ENCODE measurements at regions of chr16 and their contacts with region 1.

Region 1: GRCh38 chr16:76464955-76465638 is 187.9 kb downstream of the CNTNAP4 start:
- DNase-seq: no peak
- ATAC-seq: no peak
- H3K4me3 Mint-ChIP-seq: no peak overlapping the region
- H3K27ac Mint-ChIP-seq: no peak overlapping the region
- H3K4me1 Mint-ChIP-seq: no peaks in the 10 kb centered on the region
- H3K27me3 Mint-ChIP-seq: no peaks in the 10 kb centered on the region

Region 2: GRCh38 chr16:76409706-76410105 is 55.4 kb before region 1 on chr16:
- CTCF ChIA-PET with region 1: no interaction called
- POLR2A ChIA-PET with region 1: no interaction called
- intact Hi-C with region 1: no loop called
- DNase-seq: no peak
- ATAC-seq: no peak
- H3K4me3 Mint-ChIP-seq: no peak overlapping the region
- H3K27ac Mint-ChIP-seq: no peak overlapping the region
- H3K4me1 Mint-ChIP-seq: no peaks in the 10 kb centered on the region
- H3K27me3 Mint-ChIP-seq: no peaks in the 10 kb centered on the region

Region 3: DNA sequence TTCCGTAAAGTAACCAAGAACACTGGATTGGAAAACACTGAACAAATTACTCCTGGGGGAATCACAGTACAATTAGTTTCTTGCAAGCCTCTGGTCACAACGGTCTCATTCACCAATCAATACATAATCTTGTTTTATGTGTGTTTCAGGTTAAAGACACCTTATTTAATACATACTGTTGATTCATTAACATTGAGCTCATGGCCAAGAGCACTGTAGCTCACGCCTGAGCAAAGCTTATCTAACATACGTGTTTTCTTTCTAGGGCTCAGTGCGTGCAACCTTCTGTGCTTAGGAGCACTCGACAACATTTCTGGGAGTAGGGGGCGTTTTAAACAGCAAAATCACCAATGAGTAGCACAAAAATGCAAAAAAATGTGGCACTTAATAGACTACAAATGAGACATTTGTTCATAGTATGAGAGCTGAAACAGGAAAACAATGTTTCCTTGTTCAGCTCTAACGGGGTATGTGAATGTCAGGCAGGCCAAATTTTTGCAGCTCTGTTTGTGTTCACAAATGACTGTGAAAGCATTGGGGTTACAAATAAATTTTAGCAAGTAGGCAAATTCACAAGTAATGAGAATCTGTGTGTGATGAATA is 18.3 kb after region 1 on chr16:
- CTCF ChIA-PET with region 1: no interaction called
- POLR2A ChIA-PET with region 1: no interaction called
- intact Hi-C with region 1: loop called in 1 of 2 experiments (anchors 1 kb)
- DNase-seq: no peak
- ATAC-seq: no peak
- H3K4me3 Mint-ChIP-seq: no peak overlapping the region
- H3K27ac Mint-ChIP-seq: no peak overlapping the region
- H3K4me1 Mint-ChIP-seq: no peaks in the 10 kb centered on the region
- H3K27me3 Mint-ChIP-seq: peaks cover 2% of the 10 kb centered on the region

Region 4: DNA sequence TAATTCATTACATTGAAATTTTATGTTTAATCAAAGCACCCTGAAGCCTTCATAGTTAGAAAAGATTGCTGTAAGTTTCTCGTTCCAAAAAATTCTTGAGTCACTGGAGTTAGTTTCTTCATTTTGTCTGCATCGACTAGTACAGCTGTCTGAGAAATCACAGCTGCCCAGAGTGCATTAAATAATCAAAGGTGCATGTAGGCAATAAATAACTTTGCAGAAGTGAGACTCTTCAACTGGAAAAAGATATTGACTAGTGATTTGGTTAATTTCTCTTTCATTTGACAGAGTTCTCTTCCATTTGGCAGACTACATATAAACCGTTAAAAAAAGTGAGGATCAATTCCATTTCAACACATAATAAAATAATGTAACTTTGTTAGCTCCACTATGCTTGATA is 46.1 kb after region 1 on chr16:
- CTCF ChIA-PET with region 1: no interaction called
- POLR2A ChIA-PET with region 1: no interaction called
- intact Hi-C with region 1: no loop called
- DNase-seq: no peak
- ATAC-seq: no peak
- H3K4me3 Mint-ChIP-seq: no peak overlapping the region
- H3K27ac Mint-ChIP-seq: no peak overlapping the region
- H3K4me1 Mint-ChIP-seq: no peaks in the 10 kb centered on the region
- H3K27me3 Mint-ChIP-seq: no peaks in the 10 kb centered on the region

Measured in activated CD4-positive, alpha-beta T cell treated with anti-CD3 and anti-CD28 coated beads for 36 hours (primary cell).